HCT116 (cell line): ENCODE measurements at regions of chr6 and their contacts with region 1.

Region 1: DNA sequence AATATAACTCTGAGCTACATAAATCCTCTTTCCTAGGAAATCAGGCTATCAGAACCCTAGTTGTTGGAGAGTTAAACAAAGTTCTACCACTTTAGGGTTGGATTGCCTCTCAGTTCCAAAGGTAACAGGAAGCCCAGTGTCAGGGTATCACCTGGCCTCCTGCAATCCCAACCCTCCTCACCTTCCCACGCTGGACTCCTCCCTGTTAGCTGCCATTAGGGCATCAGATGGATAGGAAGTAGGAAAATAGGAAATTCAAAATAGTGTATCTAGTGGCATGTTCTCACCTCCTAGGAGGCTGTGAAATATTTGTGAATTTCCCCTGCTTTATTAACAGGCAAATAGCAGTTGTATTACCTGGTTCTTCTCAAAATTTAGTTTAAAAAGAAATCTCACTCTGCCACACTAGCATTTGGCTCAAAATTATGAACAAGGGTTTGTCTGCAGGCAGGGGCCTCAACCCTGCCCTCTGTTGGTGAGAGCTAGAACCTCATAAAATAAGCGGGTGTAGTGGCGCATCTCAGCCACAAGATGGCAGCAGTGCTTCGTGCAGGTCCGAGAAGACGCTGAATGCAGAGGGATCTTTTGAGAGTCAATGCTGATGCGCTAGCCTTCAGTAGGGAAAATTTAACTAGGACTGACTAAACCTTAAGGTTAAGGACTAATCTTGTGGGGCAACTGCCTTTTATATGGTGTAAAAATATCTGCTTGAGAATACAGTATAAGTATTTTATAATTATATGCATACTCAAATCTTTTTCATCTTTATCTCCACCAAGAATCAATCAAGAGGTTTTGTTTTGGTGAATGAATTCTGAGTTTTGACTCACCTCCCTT is 209.8 kb upstream of the KCNQ5 start:
- DNase-seq: peak; percentile 54
- ATAC-seq: peak; percentile 87
- H3K4me3 ChIP-seq: no peak overlapping the region
- H3K27ac ChIP-seq: no peak overlapping the region
- H3K4me1 ChIP-seq: no peaks in the 10 kb centered on the region
- H3K27me3 ChIP-seq: peaks cover 26% of the 10 kb centered on the region
- CTCF ChIP-seq: peak; percentile 99 to 100 (median 100)
- POLR2A ChIP-seq: no peak
- RAD21 ChIP-seq: peak; percentile 96

Region 2: DNA sequence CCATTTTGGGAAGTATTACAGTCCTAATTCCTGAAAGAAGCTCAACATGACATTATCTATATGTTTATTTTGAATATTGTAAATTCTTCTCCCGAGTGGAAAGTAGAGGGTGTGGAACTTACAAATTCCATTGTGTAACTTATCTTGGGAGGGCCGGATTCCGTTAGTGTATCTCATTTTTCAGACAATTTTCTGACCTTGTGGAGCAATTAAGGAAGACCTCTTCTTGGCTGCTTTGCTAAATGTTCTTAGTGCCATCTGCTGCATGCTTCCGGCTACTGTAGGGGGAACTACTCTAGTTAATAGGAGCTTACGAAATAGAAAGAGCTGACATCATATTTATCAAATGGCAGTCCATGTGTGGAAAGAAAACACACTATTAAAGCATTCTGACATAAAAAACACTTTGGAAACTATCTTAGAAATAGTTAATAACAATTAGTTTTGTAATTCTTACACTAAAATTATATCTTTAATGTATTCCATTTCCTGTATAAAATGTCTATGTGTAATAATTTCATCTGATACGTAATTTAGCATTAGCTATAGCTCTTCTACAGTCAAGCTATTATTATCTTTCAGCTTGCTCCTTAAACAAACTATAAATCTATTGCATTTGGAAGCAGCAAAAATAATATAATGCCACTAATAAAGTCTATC is 168.3 kb after region 1 on chr6:
- CTCF ChIA-PET with region 1: interaction called, 33 read pairs
- POLR2A ChIA-PET with region 1: no interaction called
- RAD21 ChIA-PET with region 1: interaction called in 1 of 2 experiments, 3 read pairs
- intact Hi-C with region 1: loop called (anchors 5 kb)
- DNase-seq: peak; percentile 31
- ATAC-seq: peak; percentile 57
- H3K4me3 ChIP-seq: no peak overlapping the region
- H3K27ac ChIP-seq: no peak overlapping the region
- H3K4me1 ChIP-seq: no peaks in the 10 kb centered on the region
- H3K27me3 ChIP-seq: peaks cover 5% of the 10 kb centered on the region; the same call in 1 of the 2 replicates
- CTCF ChIP-seq: peak; percentile 33 to 45 (median 39); a peak in 3 of 6 replicates
- POLR2A ChIP-seq: no peak
- RAD21 ChIP-seq: peak; percentile 50; the same call in 1 of the 2 replicates

Region 3: DNA sequence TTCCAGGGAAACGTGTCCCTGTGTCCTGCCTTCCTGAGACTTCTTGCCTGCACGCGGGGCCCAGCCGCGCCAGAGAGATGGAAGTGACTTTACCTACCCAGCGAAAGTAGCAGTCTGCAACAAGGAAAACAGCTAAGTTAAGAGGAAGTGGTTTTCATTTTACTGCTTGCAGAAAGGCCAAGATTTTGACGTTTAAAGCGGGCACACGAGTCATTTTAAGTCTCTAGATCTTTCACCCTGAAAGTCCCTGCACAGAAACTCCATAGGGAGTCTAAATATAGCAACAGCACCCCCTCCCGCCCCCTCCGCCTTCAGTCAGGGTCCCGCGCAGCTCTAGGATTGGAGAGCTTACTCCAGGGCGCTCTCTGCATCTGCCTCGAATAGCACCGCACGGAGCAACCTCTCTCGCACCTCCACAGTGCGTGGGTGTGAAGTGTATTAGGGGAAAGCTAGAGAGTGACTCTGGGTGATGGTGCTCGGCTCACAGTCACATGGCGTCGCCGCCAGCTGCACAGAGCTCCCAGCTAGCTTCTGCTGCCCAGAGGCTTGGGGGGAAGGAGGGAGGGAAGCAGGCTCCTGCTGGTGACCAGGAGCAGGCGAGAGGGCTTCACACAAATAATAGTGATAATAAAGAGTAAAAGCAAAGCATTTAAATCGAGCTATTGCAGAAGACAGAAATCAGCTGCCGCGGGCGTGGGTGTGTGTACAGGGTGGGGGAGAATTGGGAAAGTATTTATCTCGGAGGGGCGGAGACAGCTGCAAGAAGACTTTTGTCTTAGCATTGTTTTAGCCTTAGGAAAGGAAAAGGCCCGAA is 208.0 kb after region 1 on chr6:
- CTCF ChIA-PET with region 1: interaction called, 10 read pairs
- POLR2A ChIA-PET with region 1: no interaction called
- RAD21 ChIA-PET with region 1: no interaction called
- intact Hi-C with region 1: no loop called
- DNase-seq: no peak
- ATAC-seq: no peak
- H3K4me3 ChIP-seq: no peak overlapping the region
- H3K27ac ChIP-seq: no peak overlapping the region
- H3K4me1 ChIP-seq: no peaks in the 10 kb centered on the region
- H3K27me3 ChIP-seq: peaks cover 11% of the 10 kb centered on the region; the same call in 1 of the 2 replicates
- CTCF ChIP-seq: no peak
- POLR2A ChIP-seq: no peak
- RAD21 ChIP-seq: no peak

Region 4: GRCh38 chr6:72911463-72912155 is 499.5 kb after region 1 on chr6:
- CTCF ChIA-PET with region 1: no interaction called
- POLR2A ChIA-PET with region 1: no interaction called
- RAD21 ChIA-PET with region 1: no interaction called
- intact Hi-C with region 1: loop called (anchors 10 kb)
- DNase-seq: no peak
- ATAC-seq: no peak
- H3K4me3 ChIP-seq: no peak overlapping the region
- H3K27ac ChIP-seq: no peak overlapping the region
- H3K4me1 ChIP-seq: no peaks in the 10 kb centered on the region
- H3K27me3 ChIP-seq: peaks cover 29% of the 10 kb centered on the region
- CTCF ChIP-seq: no peak
- POLR2A ChIP-seq: no peak
- RAD21 ChIP-seq: no peak

Region 5: GRCh38 chr6:73129653-73130443 is 717.8 kb after region 1 on chr6:
- CTCF ChIA-PET with region 1: interaction called, 7 read pairs
- POLR2A ChIA-PET with region 1: no interaction called
- RAD21 ChIA-PET with region 1: no interaction called
- intact Hi-C with region 1: loop called (anchors 1 kb)
- DNase-seq: peak; percentile 66
- ATAC-seq: peak; percentile 91
- H3K4me3 ChIP-seq: no peak overlapping the region
- H3K27ac ChIP-seq: no peak overlapping the region
- H3K4me1 ChIP-seq: peaks cover 0 to 11% of the 10 kb centered on the region in 2 experiments; a peak in 1 of 4 replicates
- H3K27me3 ChIP-seq: peaks cover 25% of the 10 kb centered on the region
- CTCF ChIP-seq: peak; percentile 88 to 99 (median 99)
- POLR2A ChIP-seq: no peak
- RAD21 ChIP-seq: peak; percentile 93

Region 6: DNA sequence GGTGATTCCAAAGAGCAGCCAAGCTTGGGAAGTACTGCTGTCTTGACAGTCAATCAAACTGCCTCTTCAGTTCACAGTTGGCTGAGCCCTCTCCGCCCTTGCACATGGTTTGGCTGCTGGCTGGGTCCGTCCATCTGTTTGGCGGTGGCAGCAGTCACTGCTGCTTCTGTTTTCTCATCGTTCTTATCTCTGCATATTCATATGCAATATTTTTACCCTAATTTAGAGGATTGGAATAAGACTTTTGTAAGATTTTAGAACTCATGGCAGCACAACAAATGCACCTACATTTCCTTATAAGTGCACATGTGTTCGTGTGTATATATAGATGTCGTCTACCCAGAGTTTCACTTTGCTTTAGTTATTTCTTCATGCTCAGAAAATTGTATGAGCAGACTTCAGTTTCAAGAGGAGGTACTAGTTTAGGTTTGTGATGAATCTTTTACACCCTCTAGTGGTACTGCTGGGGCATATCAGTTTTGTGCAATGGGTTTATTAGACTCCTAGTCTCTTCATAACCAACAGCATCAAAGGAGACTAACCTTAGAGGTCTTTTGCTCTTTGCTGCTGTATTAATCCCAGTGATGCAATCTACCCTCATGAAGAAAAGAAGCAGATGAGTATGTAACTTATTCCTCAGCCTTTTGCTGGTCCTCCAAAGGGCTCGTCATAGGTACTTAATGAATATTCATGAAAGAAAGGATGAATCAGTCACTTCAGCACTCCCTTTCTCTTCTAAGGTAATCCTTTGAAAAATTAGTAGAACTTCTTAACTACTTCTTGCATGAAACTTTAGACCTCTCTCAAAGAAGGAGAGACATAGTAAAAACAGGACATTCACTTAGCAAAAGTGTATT is 768.9 kb after region 1 on chr6:
- CTCF ChIA-PET with region 1: no interaction called
- POLR2A ChIA-PET with region 1: no interaction called
- RAD21 ChIA-PET with region 1: no interaction called
- intact Hi-C with region 1: loop called (anchors 1 kb)
- DNase-seq: peak; percentile 39
- ATAC-seq: peak; percentile 95
- H3K4me3 ChIP-seq: no peak overlapping the region
- H3K27ac ChIP-seq: no peak overlapping the region
- H3K4me1 ChIP-seq: no peaks in the 10 kb centered on the region
- H3K27me3 ChIP-seq: peaks cover 82% of the 10 kb centered on the region
- CTCF ChIP-seq: peak; percentile 63 to 88 (median 79)
- POLR2A ChIP-seq: no peak
- RAD21 ChIP-seq: peak; percentile 79